Activated CD8-positive, alpha-beta memory T cell treated with anti-CD3 and anti-CD28 coated beads, Interleukin-2, amount 10 ng/mL, durations not matched to agents 7 days and 5 days (primary cell): ENCODE measurements at regions of chr5 and their contacts with region 1.

Region 1: GRCh38 chr5:177390363-177391300 is 6.4 kb downstream of the SLC34A1 start:
- DNase-seq: peak; percentile 93
- ATAC-seq: peak; percentile 72
- H3K4me3 Mint-ChIP-seq: peak overlapping the region; percentile 37
- H3K27ac Mint-ChIP-seq: peak overlapping the region; percentile 88
- H3K4me1 Mint-ChIP-seq: peaks cover 47% of the 10 kb centered on the region
- H3K27me3 Mint-ChIP-seq: no peaks in the 10 kb centered on the region

Region 2: DNA sequence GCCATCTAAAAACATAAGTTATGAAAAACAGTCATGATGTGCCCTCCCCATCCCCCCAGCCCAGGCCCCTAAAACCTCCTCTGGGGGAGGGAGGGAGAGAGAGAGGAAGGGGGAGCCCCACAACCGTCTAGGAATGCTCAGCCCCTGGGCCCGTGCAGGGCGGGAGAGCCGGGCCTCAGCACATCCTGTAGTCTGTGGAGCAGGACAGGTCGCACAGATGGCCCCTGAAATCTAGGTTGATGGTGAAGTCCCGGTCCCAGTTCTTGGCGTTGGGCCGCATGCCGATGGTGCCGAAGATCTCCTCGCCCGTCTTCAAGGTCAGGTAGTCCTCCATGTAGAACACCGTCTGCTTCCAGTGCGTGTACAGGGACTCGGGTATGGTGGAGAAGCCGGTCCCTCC is 125.2 kb before region 1 on chr5:
- CTCF ChIA-PET with region 1: no interaction called
- DNase-seq: no peak
- ATAC-seq: no peak
- H3K4me3 Mint-ChIP-seq: no peak overlapping the region
- H3K27ac Mint-ChIP-seq: no peak overlapping the region
- H3K4me1 Mint-ChIP-seq: peaks cover 10% of the 10 kb centered on the region
- H3K27me3 Mint-ChIP-seq: no peaks in the 10 kb centered on the region

Region 3: DNA sequence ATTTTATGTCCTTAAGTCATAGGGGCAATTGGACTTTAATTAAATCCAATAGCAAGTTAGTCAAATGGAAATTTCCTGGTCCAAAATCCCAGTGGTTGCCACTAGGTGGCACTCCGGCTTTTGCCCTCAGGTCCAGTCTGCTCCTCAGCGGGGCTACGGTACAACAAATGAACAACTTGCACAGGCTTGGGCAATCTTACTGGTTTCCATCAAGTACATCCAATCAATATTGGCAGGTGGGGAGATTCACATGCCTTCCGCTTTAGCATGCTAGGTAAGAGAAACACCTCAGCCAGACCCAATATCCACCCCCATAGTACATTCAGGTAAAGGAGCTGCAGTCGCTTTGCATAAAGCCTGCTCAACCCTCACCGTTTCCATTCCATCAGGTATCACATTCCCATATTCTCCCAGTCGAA is 72.7 kb before region 1 on chr5:
- CTCF ChIA-PET with region 1: interaction called, 47 read pairs
- DNase-seq: peak; percentile 87
- ATAC-seq: peak; percentile 76
- H3K4me3 Mint-ChIP-seq: no peak overlapping the region
- H3K27ac Mint-ChIP-seq: no peak overlapping the region
- H3K4me1 Mint-ChIP-seq: peaks cover 48% of the 10 kb centered on the region
- H3K27me3 Mint-ChIP-seq: no peaks in the 10 kb centered on the region

Region 4: GRCh38 chr5:177378884-177379883 is 11.4 kb before region 1 on chr5:
- CTCF ChIA-PET with region 1: interaction called, 405 read pairs
- DNase-seq: no peak
- ATAC-seq: peak; percentile 87
- H3K4me3 Mint-ChIP-seq: no peak overlapping the region
- H3K27ac Mint-ChIP-seq: peak overlapping the region; percentile 42
- H3K4me1 Mint-ChIP-seq: peaks cover 17% of the 10 kb centered on the region
- H3K27me3 Mint-ChIP-seq: no peaks in the 10 kb centered on the region

Region 5: GRCh38 chr5:177425801-177426565 is 35.4 kb after region 1 on chr5:
- CTCF ChIA-PET with region 1: interaction called, 39 read pairs
- DNase-seq: peak; percentile 100
- ATAC-seq: peak; percentile 87
- H3K4me3 Mint-ChIP-seq: peak overlapping the region; percentile 85
- H3K27ac Mint-ChIP-seq: peak overlapping the region; percentile 98
- H3K4me1 Mint-ChIP-seq: peaks cover 45% of the 10 kb centered on the region
- H3K27me3 Mint-ChIP-seq: no peaks in the 10 kb centered on the region

Region 6: GRCh38 chr5:177440211-177440971 is 49.8 kb after region 1 on chr5:
- CTCF ChIA-PET with region 1: interaction called, 69 read pairs
- DNase-seq: peak; percentile 41
- ATAC-seq: no peak
- H3K4me3 Mint-ChIP-seq: no peak overlapping the region
- H3K27ac Mint-ChIP-seq: no peak overlapping the region
- H3K4me1 Mint-ChIP-seq: peaks cover 33% of the 10 kb centered on the region
- H3K27me3 Mint-ChIP-seq: no peaks in the 10 kb centered on the region

Region 7: GRCh38 chr5:177497292-177498033 is 106.8 kb after region 1 on chr5 and contains the start of gene PDLIM7:
- CTCF ChIA-PET with region 1: interaction called, 86 read pairs
- DNase-seq: peak; percentile 96
- ATAC-seq: peak; percentile 90
- H3K4me3 Mint-ChIP-seq: peak within 1 kb of the TSS; percentile 82
- H3K27ac Mint-ChIP-seq: peak within 1 kb of the TSS; percentile 72
- H3K4me1 Mint-ChIP-seq: peaks cover 44% of the 10 kb centered on the region
- H3K27me3 Mint-ChIP-seq: peaks cover 21% of the 10 kb centered on the region
- total RNA-seq, gene PDLIM7: 72.9 to 81.2 TPM